PC-9 (cell line): ENCODE measurements at regions of chr3 and their contacts with region 1.

Region 1: GRCh38 chr3:24598695-24599470 is 104.2 kb upstream of the THRB start:
- DNase-seq: peak; percentile 26 to 59
- H3K4me3 ChIP-seq: 0 out of 2 replicates have a peak overlapping the region, but pooled peaks have one; percentile 13
- H3K27ac ChIP-seq: peak overlapping the region; percentile 70
- H3K4me1 ChIP-seq: peaks cover 24% of the 10 kb centered on the region
- H3K27me3 ChIP-seq: no peaks in the 10 kb centered on the region
- CTCF ChIP-seq: no peak

Region 2: DNA sequence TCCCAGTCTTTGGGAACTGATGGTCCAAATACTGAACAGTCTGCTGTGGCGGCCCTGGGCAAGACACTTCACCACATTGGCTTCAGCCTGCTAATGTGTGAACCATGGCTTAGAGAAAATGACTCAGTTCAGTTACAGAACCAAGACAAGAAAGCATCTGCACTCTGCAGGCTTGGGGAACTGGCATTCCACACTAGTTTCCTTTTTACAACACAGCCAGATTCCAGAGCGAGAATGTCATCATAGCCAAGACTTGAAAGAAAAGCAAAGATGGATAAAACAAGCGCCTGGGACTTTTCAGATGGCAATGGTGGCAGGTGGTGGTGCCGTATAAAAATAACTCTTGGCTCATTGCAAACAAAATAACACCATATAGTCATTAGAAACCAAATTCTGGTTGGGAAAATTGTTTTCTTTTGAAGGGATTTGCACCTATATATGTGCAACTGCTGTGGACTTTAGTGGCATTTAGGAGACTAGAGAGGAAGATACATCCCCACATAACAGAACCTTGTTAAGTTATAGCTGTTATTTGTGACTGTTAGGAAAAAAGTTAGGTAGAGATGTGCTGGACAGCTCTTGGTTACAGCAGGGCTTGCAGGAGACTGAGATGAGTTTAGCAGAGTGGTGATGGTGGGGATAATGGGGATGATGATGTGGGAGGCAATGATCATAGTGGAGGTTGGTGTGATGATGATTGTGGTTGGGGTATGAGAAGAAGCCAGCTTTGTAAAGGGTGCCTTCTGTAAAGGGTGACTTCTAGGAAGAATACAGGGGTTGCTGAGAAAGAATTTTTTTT is 377.8 kb before region 1 on chr3:
- CTCF ChIA-PET with region 1: no interaction called
- POLR2A ChIA-PET with region 1: no interaction called
- intact Hi-C with region 1: no loop called
- DNase-seq: peak; percentile 52 to 83
- H3K4me3 ChIP-seq: no peak overlapping the region
- H3K27ac ChIP-seq: peak overlapping the region; percentile 50
- H3K4me1 ChIP-seq: peaks cover 18% of the 10 kb centered on the region
- H3K27me3 ChIP-seq: no peaks in the 10 kb centered on the region
- CTCF ChIP-seq: no peak

Region 3: DNA sequence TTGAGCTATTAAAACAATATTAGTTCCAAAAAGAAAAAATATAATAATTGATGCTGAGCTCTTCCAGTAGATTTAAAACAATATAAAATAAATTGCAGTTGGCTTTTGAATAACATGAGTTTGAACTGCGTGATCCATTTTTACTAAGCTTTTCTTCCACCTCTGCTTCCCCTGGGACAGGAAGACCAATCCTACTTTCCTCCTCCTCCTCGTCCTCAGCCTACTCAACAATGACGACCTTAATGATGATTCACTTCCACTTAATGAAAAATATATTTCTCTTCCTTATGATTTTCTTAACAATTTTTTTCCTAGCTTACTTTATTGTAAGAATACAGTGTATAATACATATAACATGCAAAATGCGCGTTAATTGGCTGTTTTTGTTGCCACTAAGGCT is 25.3 kb before region 1 on chr3:
- CTCF ChIA-PET with region 1: no interaction called
- POLR2A ChIA-PET with region 1: interaction called, 11 read pairs
- intact Hi-C with region 1: no loop called
- DNase-seq: no peak
- H3K4me3 ChIP-seq: no peak overlapping the region
- H3K27ac ChIP-seq: no peak overlapping the region
- H3K4me1 ChIP-seq: no peaks in the 10 kb centered on the region
- H3K27me3 ChIP-seq: no peaks in the 10 kb centered on the region
- CTCF ChIP-seq: no peak

Region 4: DNA sequence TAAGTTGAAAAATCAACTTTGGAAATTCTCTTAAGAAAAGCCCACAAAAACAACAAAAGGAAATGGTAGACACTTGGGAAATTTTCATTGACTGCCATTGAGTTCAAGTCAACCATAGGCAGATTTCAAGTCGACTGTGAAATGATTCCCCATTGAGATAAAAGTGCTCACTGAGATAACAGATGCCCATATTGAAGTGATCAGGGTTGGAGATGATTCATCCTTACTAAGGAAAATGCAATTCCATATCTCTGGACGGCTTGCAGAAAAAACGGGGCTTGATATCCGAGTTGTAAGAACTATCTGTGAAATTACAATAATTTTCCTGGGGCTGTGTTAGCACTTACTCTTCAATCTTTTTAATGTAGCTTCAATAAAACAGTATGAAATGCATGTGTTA is 268.9 kb after region 1 on chr3:
- CTCF ChIA-PET with region 1: no interaction called
- POLR2A ChIA-PET with region 1: no interaction called
- intact Hi-C with region 1: no loop called
- DNase-seq: no peak
- H3K4me3 ChIP-seq: no peak overlapping the region
- H3K27ac ChIP-seq: no peak overlapping the region
- H3K4me1 ChIP-seq: no peaks in the 10 kb centered on the region
- H3K27me3 ChIP-seq: no peaks in the 10 kb centered on the region
- CTCF ChIP-seq: no peak